Cardiac septum (tissue), 1 donor: ENCODE measurements at regions of chrX and their contacts with region 1.

Region 1: DNA sequence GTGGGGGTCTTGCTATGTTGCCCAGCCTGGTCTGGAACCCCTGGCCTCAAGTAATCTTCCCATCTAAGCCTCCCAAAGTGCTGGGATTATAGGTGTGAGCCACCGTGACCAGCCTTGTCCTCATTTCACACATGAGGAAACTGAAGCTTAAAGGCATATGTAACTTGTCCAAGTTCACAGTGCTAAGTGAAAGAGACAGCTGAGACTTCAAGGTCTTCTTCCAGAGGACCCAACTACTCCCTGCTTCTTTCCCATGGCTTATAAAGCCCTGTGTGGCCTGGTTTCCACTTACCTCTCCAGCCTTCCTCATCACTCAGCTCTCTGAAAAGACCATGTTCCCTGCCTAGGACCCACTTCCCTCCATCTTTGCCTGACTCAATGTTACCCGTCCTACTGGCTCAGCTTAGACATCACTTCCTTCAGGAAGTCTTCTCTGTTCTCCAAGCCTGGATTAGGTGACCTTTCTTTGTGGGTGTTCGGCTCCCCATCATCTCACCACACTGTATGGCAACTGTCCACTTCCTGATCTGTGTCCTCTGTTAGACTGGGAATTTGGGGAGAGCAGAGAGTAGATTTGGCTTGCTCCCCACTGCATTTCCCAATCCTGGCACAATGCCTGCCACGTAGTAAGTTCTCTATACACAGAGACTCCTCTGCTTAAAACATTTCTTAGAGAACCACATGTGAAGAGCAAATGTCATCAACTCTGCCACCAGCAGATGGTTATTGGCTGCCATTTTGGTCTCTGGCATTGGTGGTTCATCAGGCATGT is 30.4 kb upstream of the LAMP2 start:
- DNase-seq: no peak

Region 2: GRCh38 chrX:120668357-120668756 is 168.9 kb after region 1 on chrX:
- intact Hi-C with region 1: loop called (anchors 5 kb)
- DNase-seq: no peak

Region 3: GRCh38 chrX:120769576-120770341 is 270.3 kb after region 1 on chrX:
- intact Hi-C with region 1: loop called (anchors 5 kb)
- DNase-seq: no peak